ENCODE measurements at regions of chr4 and their contacts with region 1.

Region 1: DNA sequence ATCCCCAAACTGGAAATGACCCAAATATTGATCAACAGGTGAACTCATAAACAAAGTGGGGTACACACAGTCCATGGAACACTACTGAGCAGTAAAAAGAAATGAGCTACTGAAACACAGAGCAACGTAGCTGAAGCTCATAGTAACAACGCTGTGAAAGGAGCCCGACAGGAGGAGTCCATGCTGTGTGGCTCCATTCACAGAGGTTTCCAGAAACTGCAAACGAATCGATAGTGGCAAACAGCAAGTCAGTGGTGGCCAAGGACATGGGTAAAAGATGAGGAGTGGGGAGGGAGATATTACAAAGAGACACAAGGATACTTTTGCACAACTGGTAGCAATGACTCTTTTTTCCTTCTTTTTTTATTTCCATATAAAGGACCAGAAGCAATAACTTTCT is 90.4 kb downstream of the HAUS3 start:
- DNase-seq: no peak
- H3K4me3 ChIP-seq: no peak overlapping the region
- H3K27ac ChIP-seq: no peak overlapping the region
- H3K4me1 ChIP-seq: no peaks in the 10 kb centered on the region
- H3K27me3 ChIP-seq: no peaks in the 10 kb centered on the region
- CTCF ChIP-seq: no peak
- POLR2A ChIP-seq: no peak

Region 2: DNA sequence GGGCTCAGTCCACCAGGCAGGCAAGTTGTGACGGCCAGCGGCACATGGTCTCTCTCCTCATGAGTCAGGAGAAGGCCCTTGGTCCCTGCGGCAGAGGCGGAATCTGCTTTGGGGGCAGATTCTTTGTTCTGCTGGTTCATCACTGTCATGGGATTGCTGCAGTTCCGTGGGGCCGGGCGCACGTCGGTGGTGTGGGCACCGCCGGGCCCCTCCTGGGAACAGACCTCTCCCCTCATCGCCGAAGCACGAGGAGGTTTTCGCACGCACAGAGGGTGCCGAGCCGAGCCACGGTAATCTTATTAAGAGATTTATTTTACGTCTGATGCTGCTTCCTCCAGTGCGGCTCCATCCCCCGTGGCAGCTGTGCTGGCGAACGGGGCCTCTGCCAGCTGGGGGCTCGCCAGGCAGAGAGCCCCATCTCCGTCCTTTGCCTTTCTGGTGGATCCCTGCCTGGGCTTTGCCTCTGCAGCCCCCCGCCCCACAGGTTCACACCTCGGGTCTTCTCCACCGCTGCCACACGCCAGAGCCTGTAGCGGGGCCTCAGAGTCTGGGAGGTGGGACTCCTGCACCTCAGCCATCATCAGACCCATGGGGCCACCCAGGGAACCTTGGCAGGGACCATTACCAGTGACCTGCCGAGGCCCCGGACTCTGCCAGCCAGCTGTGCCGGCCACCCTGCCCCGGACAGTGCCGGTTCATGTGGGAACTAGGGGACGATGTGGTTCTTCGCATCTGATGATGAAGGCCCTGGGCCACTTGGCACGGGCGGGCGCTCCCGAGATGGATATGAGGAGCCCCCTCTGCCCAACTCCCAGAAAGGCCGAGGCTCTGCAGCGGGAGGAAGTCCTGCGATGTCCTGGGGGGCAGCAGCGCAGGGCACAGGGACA is 658.6 kb before region 1 on chr4:
- intact Hi-C with region 1: no loop called
- DNase-seq: no peak
- H3K4me3 ChIP-seq: no peak overlapping the region
- H3K27ac ChIP-seq: no peak overlapping the region
- H3K4me1 ChIP-seq: no peaks in the 10 kb centered on the region
- H3K27me3 ChIP-seq: no peaks in the 10 kb centered on the region
- CTCF ChIP-seq: no peak
- POLR2A ChIP-seq: no peak

Region 3: DNA sequence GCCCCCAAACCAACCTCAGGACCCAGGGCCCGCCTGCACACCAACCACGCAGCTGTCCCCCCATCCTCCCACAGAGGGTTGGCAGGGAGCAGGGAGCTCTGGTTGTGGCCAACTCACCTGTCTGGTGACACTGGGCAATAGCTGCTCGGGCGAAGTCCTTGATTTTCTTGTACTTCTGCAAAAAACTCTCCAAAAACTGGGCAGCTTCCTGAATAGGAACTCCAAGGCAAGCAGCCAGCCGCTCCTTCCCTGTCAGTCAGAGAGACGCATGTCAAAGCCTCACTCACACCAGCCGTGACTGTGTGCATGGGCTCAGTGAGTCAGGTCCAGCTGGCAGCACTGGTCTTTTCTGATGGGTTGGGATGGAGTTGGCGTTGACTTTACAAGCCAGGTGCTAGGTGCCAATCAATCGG is 66.0 kb before region 1 on chr4:
- intact Hi-C with region 1: no loop called
- DNase-seq: no peak
- H3K4me3 ChIP-seq: no peak overlapping the region
- H3K27ac ChIP-seq: no peak overlapping the region
- H3K4me1 ChIP-seq: no peaks in the 10 kb centered on the region
- H3K27me3 ChIP-seq: no peaks in the 10 kb centered on the region
- CTCF ChIP-seq: no peak
- POLR2A ChIP-seq: no peak

Region 4: DNA sequence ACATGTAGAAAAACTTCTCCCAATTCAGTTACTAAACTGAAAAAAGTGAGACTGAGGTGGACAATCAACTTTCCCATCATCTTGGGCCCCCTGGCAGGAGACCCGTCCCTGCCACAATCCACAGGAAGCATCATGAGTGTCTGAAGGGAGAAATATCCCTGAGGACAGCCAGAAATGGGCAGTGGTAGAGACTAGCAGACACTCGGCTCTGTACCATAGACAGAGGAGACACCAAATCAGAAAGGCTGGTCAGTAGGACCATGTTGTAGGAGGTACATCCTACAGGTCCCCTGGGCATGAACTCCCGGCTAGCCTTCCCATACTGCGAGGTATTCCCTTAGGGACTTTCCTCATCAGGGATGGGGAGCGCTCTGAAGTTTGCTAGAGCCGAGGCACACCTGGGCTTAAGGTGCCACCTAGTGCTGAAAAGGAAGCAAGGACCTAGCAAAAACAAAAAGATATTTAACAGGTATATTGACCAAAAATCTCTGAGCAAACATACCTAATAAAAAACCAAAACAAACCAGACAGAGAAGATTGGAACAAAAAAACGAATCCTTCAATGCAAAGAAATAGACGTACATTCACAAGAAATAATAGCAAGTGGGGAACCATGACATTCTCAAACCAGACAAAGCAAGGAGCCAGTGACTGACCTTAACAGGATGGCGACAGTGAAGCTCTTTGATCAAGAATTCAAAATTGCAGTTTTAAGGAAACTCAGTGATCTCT is 34.8 kb after region 1 on chr4:
- intact Hi-C with region 1: loop called (anchors 2 kb)
- DNase-seq: no peak
- H3K4me3 ChIP-seq: no peak overlapping the region
- H3K27ac ChIP-seq: no peak overlapping the region
- H3K4me1 ChIP-seq: no peaks in the 10 kb centered on the region
- H3K27me3 ChIP-seq: no peaks in the 10 kb centered on the region
- CTCF ChIP-seq: no peak
- POLR2A ChIP-seq: no peak